PC-9 (cell line): ENCODE measurements at regions of chr11 and their contacts with region 1.

Region 1: GRCh38 chr11:110296226-110297075 is at the start of gene RDX:
- DNase-seq: peak; percentile 91 to 93
- H3K4me3 ChIP-seq: peak within 1 kb of the TSS; percentile 86
- H3K27ac ChIP-seq: peak within 1 kb of the TSS; percentile 83
- H3K4me1 ChIP-seq: peaks cover 63% of the 10 kb centered on the region
- H3K27me3 ChIP-seq: no peaks in the 10 kb centered on the region
- CTCF ChIP-seq: no peak; the same call in 1 of the 2 replicates
- total RNA-seq, gene RDX: 143 and 196 TPM in 2 replicates

Region 2: DNA sequence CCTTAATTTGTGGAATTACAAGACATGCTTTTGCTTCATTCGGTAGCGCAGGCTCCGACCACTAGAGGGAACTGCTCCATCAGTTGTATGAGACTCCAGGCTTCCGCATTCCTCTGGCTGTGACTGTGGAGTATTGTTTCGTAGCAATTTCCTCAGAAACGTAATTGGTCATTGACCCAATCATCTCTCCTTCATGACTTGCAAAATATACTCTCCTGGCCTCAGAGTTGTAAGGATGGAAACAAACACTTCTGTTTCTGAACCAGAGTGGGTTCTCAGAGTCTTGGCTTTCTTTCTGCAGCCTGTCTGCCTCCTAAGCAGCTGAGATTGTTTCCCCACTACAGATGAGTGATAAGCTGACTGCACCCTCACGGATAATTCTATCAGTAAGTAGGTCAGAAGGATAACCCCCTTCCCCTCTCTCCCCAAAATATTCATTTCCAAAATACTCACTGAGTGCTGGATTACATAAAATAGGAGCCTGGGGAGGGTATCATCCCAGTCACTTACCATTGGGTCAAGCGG is 350.1 kb before region 1 on chr11:
- CTCF ChIA-PET with region 1: no interaction called
- POLR2A ChIA-PET with region 1: no interaction called
- intact Hi-C with region 1: loop called (anchors 10 kb)
- DNase-seq: peak; percentile 85 to 97
- H3K4me3 ChIP-seq: peak overlapping the region; percentile 61
- H3K27ac ChIP-seq: peak overlapping the region; percentile 94
- H3K4me1 ChIP-seq: peaks cover 11% of the 10 kb centered on the region
- H3K27me3 ChIP-seq: no peaks in the 10 kb centered on the region
- CTCF ChIP-seq: peak; percentile 98

Region 3: GRCh38 chr11:110092515-110093404 is 203.7 kb before region 1 on chr11 and contains the start of gene ZC3H12C:
- CTCF ChIA-PET with region 1: no interaction called
- POLR2A ChIA-PET with region 1: no interaction called
- intact Hi-C with region 1: loop called (anchors 10 kb)
- DNase-seq: peak; percentile 89
- H3K4me3 ChIP-seq: peak within 1 kb of the TSS; percentile 82
- H3K27ac ChIP-seq: peak within 1 kb of the TSS; percentile 77
- H3K4me1 ChIP-seq: peaks cover 53% of the 10 kb centered on the region
- H3K27me3 ChIP-seq: no peaks in the 10 kb centered on the region
- CTCF ChIP-seq: peak; percentile 24; the same call in 1 of the 2 replicates
- total RNA-seq, gene ZC3H12C: 9.3 and 12.4 TPM in 2 replicates

Region 4: GRCh38 chr11:110251837-110252236 is 44.6 kb before region 1 on chr11:
- CTCF ChIA-PET with region 1: no interaction called
- POLR2A ChIA-PET with region 1: no interaction called
- intact Hi-C with region 1: no loop called
- DNase-seq: peak; percentile 58 to 95
- H3K4me3 ChIP-seq: no peak overlapping the region
- H3K27ac ChIP-seq: peak overlapping the region; percentile 66
- H3K4me1 ChIP-seq: peaks cover 24% of the 10 kb centered on the region
- H3K27me3 ChIP-seq: no peaks in the 10 kb centered on the region
- CTCF ChIP-seq: no peak

Region 5: GRCh38 chr11:110317516-110317932 is 21.1 kb after region 1 on chr11:
- CTCF ChIA-PET with region 1: no interaction called
- POLR2A ChIA-PET with region 1: no interaction called
- intact Hi-C with region 1: loop called (anchors 2 kb)
- DNase-seq: peak in 1 of 2 experiments; percentile 43
- H3K4me3 ChIP-seq: no peak overlapping the region
- H3K27ac ChIP-seq: no peak overlapping the region
- H3K4me1 ChIP-seq: peaks cover 33% of the 10 kb centered on the region
- H3K27me3 ChIP-seq: no peaks in the 10 kb centered on the region
- CTCF ChIP-seq: no peak

Region 6: GRCh38 chr11:110327508-110327907 is 31.1 kb after region 1 on chr11:
- CTCF ChIA-PET with region 1: no interaction called
- POLR2A ChIA-PET with region 1: interaction called, 6 read pairs
- intact Hi-C with region 1: loop called (anchors 1 kb)
- DNase-seq: no peak
- H3K4me3 ChIP-seq: peak overlapping the region; percentile 33; the same call in 1 of the 2 replicates
- H3K27ac ChIP-seq: peak overlapping the region; percentile 86
- H3K4me1 ChIP-seq: peaks cover 43% of the 10 kb centered on the region
- H3K27me3 ChIP-seq: no peaks in the 10 kb centered on the region
- CTCF ChIP-seq: no peak

Region 7: GRCh38 chr11:110356756-110357671 is 60.6 kb after region 1 on chr11:
- CTCF ChIA-PET with region 1: no interaction called
- POLR2A ChIA-PET with region 1: interaction called, 3 read pairs
- intact Hi-C with region 1: loop called (anchors 1 kb)
- DNase-seq: peak; percentile 59 to 99
- H3K4me3 ChIP-seq: no peak overlapping the region; the same call in 1 of the 2 replicates
- H3K27ac ChIP-seq: peak overlapping the region; percentile 84
- H3K4me1 ChIP-seq: peaks cover 32% of the 10 kb centered on the region
- H3K27me3 ChIP-seq: no peaks in the 10 kb centered on the region
- CTCF ChIP-seq: no peak

Region 8: GRCh38 chr11:110362971-110363509 is 66.6 kb after region 1 on chr11:
- CTCF ChIA-PET with region 1: no interaction called
- POLR2A ChIA-PET with region 1: interaction called, 3 read pairs
- intact Hi-C with region 1: loop called (anchors 1 kb)
- DNase-seq: peak; percentile 47 to 73
- H3K4me3 ChIP-seq: peak overlapping the region; percentile 30; the same call in 1 of the 2 replicates
- H3K27ac ChIP-seq: peak overlapping the region; percentile 72
- H3K4me1 ChIP-seq: peaks cover 46% of the 10 kb centered on the region
- H3K27me3 ChIP-seq: no peaks in the 10 kb centered on the region
- CTCF ChIP-seq: no peak